CD8-positive, alpha-beta memory T cell (primary cell): ENCODE measurements at regions of chr3 and their contacts with region 1.

Region 1: DNA sequence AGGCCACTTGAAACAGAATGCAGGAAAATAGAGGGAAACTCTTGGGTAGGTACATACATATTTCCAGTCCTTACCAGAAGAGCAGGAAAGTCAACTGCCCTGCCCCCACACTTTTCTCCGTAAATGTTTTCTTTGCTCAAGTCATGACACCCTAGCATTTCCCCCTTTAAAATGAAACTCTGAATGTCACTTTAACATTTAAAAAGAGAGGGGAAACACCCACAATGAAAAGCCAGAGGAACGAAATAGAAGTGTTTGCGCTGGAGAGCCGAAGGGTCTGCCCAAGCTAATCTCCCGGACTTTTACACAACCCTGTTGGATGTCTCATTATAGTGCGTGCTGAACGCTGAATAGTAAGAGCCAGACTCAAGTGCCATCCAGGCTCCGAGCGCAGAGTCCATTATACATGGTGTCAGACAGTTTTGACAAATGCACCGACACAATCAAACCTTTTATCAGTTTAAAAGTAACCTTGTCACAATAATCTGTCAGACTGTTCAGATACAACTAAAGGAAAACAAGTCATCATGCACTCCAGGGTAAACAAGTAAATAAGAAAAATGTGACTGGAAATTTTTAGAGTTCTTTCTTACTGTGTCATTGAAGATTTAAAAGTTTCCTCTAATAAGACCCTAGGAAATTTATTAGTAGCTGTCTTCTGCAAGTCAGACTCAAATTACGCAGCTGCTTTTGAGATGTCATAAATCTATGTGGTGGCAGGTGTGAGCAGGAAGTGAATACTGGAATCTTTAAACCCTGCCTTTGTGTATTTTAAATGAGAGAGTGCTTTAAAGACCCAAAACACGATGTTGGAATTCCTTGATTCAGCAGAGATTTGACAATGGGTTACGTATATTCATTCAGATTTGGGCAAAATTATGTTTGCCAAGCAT is 159.8 kb downstream of the RBMS3 start:
- DNase-seq: no peak
- H3K4me3 ChIP-seq: no peak overlapping the region
- H3K4me3 Mint-ChIP-seq: no peak overlapping the region
- H3K27ac ChIP-seq: no peak overlapping the region
- H3K27ac Mint-ChIP-seq: no peak overlapping the region
- H3K4me1 ChIP-seq: no peaks in the 10 kb centered on the region
- H3K4me1 Mint-ChIP-seq: no peaks in the 10 kb centered on the region
- H3K27me3 ChIP-seq: no peaks in the 10 kb centered on the region
- H3K27me3 Mint-ChIP-seq: no peaks in the 10 kb centered on the region

Region 2: GRCh38 chr3:29465836-29466235 is 25.2 kb after region 1 on chr3:
- CTCF ChIA-PET with region 1: no interaction called
- POLR2A ChIA-PET with region 1: interaction called, 10 read pairs
- DNase-seq: no peak
- H3K4me3 ChIP-seq: no peak overlapping the region
- H3K4me3 Mint-ChIP-seq: no peak overlapping the region
- H3K27ac ChIP-seq: no peak overlapping the region
- H3K27ac Mint-ChIP-seq: no peak overlapping the region
- H3K4me1 ChIP-seq: no peaks in the 10 kb centered on the region
- H3K4me1 Mint-ChIP-seq: no peaks in the 10 kb centered on the region
- H3K27me3 ChIP-seq: no peaks in the 10 kb centered on the region
- H3K27me3 Mint-ChIP-seq: no peaks in the 10 kb centered on the region

Region 3: DNA sequence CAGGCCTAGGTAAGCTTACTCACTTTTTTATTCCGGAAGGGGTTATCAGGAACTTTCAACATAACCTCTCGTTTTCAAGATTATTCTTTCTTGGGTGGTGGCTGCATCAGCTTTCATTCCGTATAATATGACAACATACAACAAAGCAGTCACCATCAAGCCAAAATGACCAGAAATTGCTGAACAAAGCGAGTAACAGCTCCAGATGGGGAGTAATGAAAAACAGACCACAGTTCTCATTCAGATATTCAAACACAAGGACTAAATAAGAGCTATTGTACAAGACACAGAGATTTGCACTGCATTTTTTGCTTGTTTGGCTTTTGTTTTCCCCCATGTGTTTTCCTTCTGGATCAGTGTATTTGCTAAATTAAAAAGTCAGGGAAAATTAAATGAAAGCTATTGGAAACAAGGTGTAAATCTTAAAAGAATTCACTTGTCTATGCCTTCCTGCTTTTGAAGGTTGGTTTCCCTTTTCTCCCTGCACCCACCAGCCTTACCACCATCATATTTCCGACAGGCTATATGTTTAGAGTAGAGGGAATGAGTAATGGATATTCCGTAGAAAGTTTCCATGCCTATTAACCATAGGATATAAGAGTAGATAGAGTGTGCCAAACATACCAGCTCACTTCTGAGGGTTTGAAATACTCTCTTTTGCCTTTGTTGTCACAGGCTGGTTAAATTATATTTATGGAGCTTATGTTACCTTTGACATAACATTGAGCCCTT is 53.8 kb after region 1 on chr3:
- CTCF ChIA-PET with region 1: no interaction called
- POLR2A ChIA-PET with region 1: no interaction called
- DNase-seq: no peak
- H3K4me3 ChIP-seq: no peak overlapping the region
- H3K4me3 Mint-ChIP-seq: no peak overlapping the region
- H3K27ac ChIP-seq: no peak overlapping the region
- H3K27ac Mint-ChIP-seq: no peak overlapping the region
- H3K4me1 ChIP-seq: no peaks in the 10 kb centered on the region
- H3K4me1 Mint-ChIP-seq: no peaks in the 10 kb centered on the region
- H3K27me3 ChIP-seq: no peaks in the 10 kb centered on the region
- H3K27me3 Mint-ChIP-seq: no peaks in the 10 kb centered on the region

Region 4: DNA sequence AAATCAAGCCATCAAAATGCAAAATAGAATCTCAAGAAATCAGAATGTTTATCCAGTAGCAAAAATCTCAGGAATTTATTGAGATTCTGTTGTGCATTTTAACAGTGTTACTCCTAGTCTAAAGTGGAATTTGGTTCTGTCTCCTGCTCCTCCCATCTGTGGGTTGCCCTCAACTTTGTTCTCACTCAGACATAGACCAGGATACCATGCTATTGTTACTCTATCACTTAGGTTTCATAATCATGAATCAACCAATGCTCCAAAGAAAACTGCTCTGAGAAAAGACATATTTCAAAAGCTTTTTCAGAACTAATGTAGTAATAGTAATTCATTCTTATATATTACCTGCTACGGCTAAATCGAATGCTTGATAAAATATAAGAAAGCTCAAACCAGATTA is 114.9 kb after region 1 on chr3:
- CTCF ChIA-PET with region 1: no interaction called
- POLR2A ChIA-PET with region 1: no interaction called
- DNase-seq: no peak
- H3K4me3 ChIP-seq: no peak overlapping the region
- H3K4me3 Mint-ChIP-seq: no peak overlapping the region
- H3K27ac ChIP-seq: no peak overlapping the region
- H3K27ac Mint-ChIP-seq: no peak overlapping the region
- H3K4me1 ChIP-seq: no peaks in the 10 kb centered on the region
- H3K4me1 Mint-ChIP-seq: no peaks in the 10 kb centered on the region
- H3K27me3 ChIP-seq: no peaks in the 10 kb centered on the region
- H3K27me3 Mint-ChIP-seq: no peaks in the 10 kb centered on the region